ENCODE measurements at regions of chr5 and their contacts with region 1.

Region 1: GRCh38 chr5:66757188-66757833 is 161.1 kb downstream of the MAST4 start:
- DNase-seq: peak in 5 of 14 experiments; percentile 6 to 45 (median 33)
- ATAC-seq: no peak
- H3K4me3 ChIP-seq: no peak overlapping the region
- H3K4me3 Mint-ChIP-seq: no peak overlapping the region
- H3K27ac ChIP-seq: no peak overlapping the region
- H3K27ac Mint-ChIP-seq: no peak overlapping the region
- H3K4me1 ChIP-seq: no peaks in the 10 kb centered on the region
- H3K4me1 Mint-ChIP-seq: no peaks in the 10 kb centered on the region
- H3K27me3 ChIP-seq: no peaks in the 10 kb centered on the region
- H3K27me3 Mint-ChIP-seq: peaks cover 17% of the 10 kb centered on the region
- CTCF ChIP-seq: peak; percentile 25

Region 2: DNA sequence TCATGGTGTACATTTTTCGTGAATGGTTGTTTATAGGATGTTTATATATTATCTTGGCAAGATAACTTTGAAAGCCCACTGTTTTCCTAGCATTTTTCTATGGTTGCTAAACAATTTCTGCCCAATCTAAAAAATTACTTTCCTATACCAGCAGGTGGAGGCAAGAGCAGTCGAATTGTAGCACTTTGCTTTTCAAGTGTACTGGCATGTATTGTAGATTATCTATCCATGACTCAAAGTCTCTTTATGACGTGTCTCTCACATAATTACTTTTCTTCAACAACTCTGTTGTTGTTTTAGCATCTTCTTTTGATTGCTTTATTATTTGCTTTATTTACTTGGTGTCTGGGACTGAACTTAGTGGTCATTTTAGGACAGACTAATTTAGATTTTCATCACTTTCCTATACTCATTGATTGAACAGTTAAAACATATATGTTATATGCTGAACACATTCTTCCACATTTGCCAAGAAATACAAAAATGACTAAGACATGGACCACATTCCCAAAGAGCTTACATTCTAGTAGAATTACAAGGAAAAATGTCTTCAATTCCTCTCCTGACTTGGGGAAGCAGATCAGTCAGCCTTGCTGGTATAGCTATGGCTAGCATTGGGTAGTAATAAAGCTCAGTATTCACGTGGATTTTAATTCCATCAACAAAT is 1014.6 kb before region 1 on chr5:
- CTCF ChIA-PET with region 1: no interaction called
- POLR2A ChIA-PET with region 1: no interaction called
- intact Hi-C with region 1: loop called in 1 of 2 experiments (anchors 5 kb)
- DNase-seq: peak in 4 of 14 experiments; percentile 18 to 55 (median 46)
- ATAC-seq: peak; percentile 81
- H3K4me3 ChIP-seq: no peak overlapping the region
- H3K4me3 Mint-ChIP-seq: no peak overlapping the region
- H3K27ac ChIP-seq: no peak overlapping the region
- H3K27ac Mint-ChIP-seq: no peak overlapping the region
- H3K4me1 ChIP-seq: no peaks in the 10 kb centered on the region
- H3K4me1 Mint-ChIP-seq: peaks cover 7% of the 10 kb centered on the region
- H3K27me3 ChIP-seq: no peaks in the 10 kb centered on the region
- H3K27me3 Mint-ChIP-seq: no peaks in the 10 kb centered on the region
- CTCF ChIP-seq: peak; percentile 71

Region 3: GRCh38 chr5:66171349-66172344 is 585.7 kb before region 1 on chr5:
- CTCF ChIA-PET with region 1: no interaction called
- POLR2A ChIA-PET with region 1: no interaction called
- intact Hi-C with region 1: loop called (anchors 2 to 5 kb)
- DNase-seq: peak; percentile 20 to 89 (median 44)
- ATAC-seq: peak; percentile 68
- H3K4me3 ChIP-seq: no peak overlapping the region
- H3K4me3 Mint-ChIP-seq: peak overlapping the region; percentile 36
- H3K27ac ChIP-seq: peak overlapping the region in 1 of 2 donors; percentile 6
- H3K27ac Mint-ChIP-seq: peak overlapping the region; percentile 85
- H3K4me1 ChIP-seq: no peaks in the 10 kb centered on the region
- H3K4me1 Mint-ChIP-seq: peaks cover 41% of the 10 kb centered on the region
- H3K27me3 ChIP-seq: no peaks in the 10 kb centered on the region
- H3K27me3 Mint-ChIP-seq: no peaks in the 10 kb centered on the region
- CTCF ChIP-seq: peak; percentile 69

Region 4: DNA sequence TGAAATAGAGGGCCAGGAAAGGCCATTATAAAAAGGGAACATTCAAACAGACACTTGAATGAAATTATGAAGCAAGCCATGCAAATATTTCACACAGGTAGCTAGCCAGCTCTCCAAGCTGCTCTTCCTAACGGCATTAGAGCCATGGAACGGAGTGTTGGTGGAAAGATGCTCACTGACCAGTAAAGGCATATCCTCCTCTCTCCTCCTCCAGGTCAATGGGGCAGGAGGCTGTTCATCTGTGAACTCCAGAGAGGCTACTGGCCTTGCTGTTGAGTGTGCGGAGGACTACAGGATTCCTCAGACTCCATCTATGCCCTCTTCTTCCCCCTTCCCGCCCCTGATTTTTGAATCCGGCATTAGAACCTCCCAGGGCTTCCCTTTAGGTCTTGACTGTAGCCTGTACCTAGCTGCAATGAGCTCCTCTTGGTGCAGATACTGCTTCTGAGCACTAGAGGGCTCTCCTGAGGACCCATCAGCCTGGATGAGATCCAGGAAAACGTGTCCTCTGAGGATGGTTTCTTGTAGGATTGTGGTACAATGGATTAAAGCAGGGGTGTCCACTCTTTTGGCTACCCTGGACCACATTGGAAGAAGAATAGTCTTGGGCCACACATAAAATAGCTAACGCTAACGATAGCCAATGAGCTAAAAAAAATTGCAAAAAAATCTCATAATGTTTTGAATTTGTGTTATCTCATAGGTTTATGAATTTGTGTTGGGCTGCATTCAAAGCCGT is 451.0 kb before region 1 on chr5:
- CTCF ChIA-PET with region 1: interaction called, 4 read pairs
- POLR2A ChIA-PET with region 1: no interaction called
- intact Hi-C with region 1: loop called in 1 of 2 experiments (anchors 2 kb)
- DNase-seq: peak in 4 of 14 experiments; percentile 26 to 58 (median 48)
- ATAC-seq: peak; percentile 65
- H3K4me3 ChIP-seq: no peak overlapping the region
- H3K4me3 Mint-ChIP-seq: no peak overlapping the region
- H3K27ac ChIP-seq: no peak overlapping the region
- H3K27ac Mint-ChIP-seq: no peak overlapping the region
- H3K4me1 ChIP-seq: peaks cover 5% of the 10 kb centered on the region
- H3K4me1 Mint-ChIP-seq: peaks cover 10% of the 10 kb centered on the region
- H3K27me3 ChIP-seq: peaks cover 0 to 10% of the 10 kb centered on the region in 2 experiments
- H3K27me3 Mint-ChIP-seq: peaks cover 5% of the 10 kb centered on the region
- CTCF ChIP-seq: peak; percentile 77

Region 5: GRCh38 chr5:66454186-66455078 is 302.9 kb before region 1 on chr5:
- CTCF ChIA-PET with region 1: no interaction called
- POLR2A ChIA-PET with region 1: no interaction called
- intact Hi-C with region 1: no loop called
- DNase-seq: no peak
- ATAC-seq: no peak
- H3K4me3 ChIP-seq: no peak overlapping the region
- H3K4me3 Mint-ChIP-seq: no peak overlapping the region
- H3K27ac ChIP-seq: no peak overlapping the region
- H3K27ac Mint-ChIP-seq: no peak overlapping the region
- H3K4me1 ChIP-seq: no peaks in the 10 kb centered on the region
- H3K4me1 Mint-ChIP-seq: no peaks in the 10 kb centered on the region
- H3K27me3 ChIP-seq: no peaks in the 10 kb centered on the region
- H3K27me3 Mint-ChIP-seq: no peaks in the 10 kb centered on the region
- CTCF ChIP-seq: no peak

Region 6: DNA sequence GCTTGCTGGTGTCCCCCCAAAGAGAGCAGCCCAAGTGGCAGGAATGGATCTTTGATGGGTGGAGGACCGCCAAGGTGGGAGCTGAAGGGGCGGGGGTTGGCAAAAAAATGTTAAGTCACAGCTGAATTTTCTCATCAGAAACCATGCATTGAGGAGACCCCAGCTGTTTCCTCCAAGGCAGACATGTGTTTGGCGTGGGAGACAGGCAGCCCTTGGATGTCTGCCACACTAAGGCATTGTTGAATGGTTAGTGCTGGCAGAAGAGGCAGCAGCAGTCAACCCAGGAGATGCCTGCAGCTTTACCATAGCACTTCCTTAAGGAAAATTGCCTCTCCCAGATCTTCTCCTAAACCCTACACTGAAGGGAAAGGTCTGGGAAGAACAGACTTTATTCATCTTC is 834.2 kb after region 1 on chr5:
- CTCF ChIA-PET with region 1: no interaction called
- POLR2A ChIA-PET with region 1: no interaction called
- intact Hi-C with region 1: no loop called
- DNase-seq: no peak
- ATAC-seq: no peak
- H3K4me3 ChIP-seq: no peak overlapping the region
- H3K4me3 Mint-ChIP-seq: no peak overlapping the region
- H3K27ac ChIP-seq: no peak overlapping the region
- H3K27ac Mint-ChIP-seq: no peak overlapping the region
- H3K4me1 ChIP-seq: no peaks in the 10 kb centered on the region
- H3K4me1 Mint-ChIP-seq: no peaks in the 10 kb centered on the region
- H3K27me3 ChIP-seq: no peaks in the 10 kb centered on the region
- H3K27me3 Mint-ChIP-seq: no peaks in the 10 kb centered on the region
- CTCF ChIP-seq: no peak

Measured in CD4-positive, alpha-beta T cell (primary cell).